Adrenal gland (tissue), 19 donors: ENCODE measurements at regions of chr2 and their contacts with region 1.

Region 1: DNA sequence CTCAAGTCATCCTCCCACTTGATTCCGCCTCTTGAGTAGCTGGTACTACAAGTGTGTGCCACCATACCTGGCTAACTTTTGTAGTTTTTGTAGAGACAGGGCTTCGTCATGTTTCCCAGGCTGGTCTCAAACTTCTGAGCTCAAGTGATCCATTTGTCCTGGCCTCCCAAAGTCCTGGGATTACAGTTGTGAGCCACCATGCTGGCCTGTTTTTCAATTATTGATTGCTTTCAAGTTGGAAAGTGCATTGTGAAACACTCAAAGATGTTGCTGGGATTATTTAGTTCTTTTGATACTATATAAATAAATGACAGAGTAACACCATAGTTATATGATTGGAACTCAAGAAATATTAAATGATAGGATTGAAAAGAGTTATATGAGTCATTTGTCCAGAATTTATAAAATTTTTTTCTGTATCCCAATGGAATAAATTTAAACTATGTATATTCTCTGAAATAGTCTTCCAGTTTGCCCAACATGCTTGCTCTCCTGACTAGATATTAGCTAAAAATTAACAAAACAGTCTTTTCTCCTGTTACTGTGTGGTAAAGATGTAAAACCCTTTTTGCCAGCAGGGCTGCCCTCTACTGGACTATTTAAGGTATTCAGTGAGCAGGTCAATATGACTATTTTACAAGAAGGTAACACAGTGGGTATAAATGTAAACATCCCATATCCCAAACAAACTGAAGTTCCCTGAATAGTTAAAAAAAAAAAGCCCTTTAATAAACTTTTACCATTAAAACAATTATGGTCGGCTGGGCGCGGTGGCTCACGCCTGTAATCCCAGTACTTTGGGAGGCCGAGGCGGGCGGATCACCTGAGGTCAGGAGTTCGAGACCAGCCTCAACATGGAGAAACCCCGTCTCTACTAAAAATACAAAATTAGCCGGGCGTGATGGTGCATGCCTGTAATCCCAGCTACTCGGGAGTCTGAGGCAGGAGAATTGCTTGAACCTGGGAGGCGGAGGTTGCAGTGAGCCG is 42.7 kb downstream of the ACSL3 start:
- DNase-seq: peak; percentile 23 to 76 (median 45)
- H3K4me3 ChIP-seq: no peak overlapping the region
- H3K27ac ChIP-seq: no peak overlapping the region
- H3K4me1 ChIP-seq: peaks cover 18 to 29% of the 10 kb centered on the region in 2 donors
- H3K27me3 ChIP-seq: no peaks in the 10 kb centered on the region
- CTCF ChIP-seq: peak; percentile 50 to 80 (median 66)
- POLR2A ChIP-seq: no peak

Region 2: GRCh38 chr2:222707689-222708525 is 195.6 kb before region 1 on chr2:
- intact Hi-C with region 1: loop called (anchors 5 to 10 kb)
- DNase-seq: peak; percentile 71 to 93 (median 79)
- H3K4me3 ChIP-seq: no peak overlapping the region
- H3K27ac ChIP-seq: no peak overlapping the region
- H3K4me1 ChIP-seq: peaks cover 0 to 14% of the 10 kb centered on the region in 2 donors
- H3K27me3 ChIP-seq: no peaks in the 10 kb centered on the region
- CTCF ChIP-seq: peak; percentile 90 to 97 (median 94)
- POLR2A ChIP-seq: no peak

Region 3: GRCh38 chr2:222797261-222797660 is 106.3 kb before region 1 on chr2:
- intact Hi-C with region 1: loop called (anchors 5 to 10 kb)
- DNase-seq: peak in 1 of 7 donors; percentile 19
- H3K4me3 ChIP-seq: no peak overlapping the region
- H3K27ac ChIP-seq: no peak overlapping the region
- H3K4me1 ChIP-seq: peaks cover 0 to 21% of the 10 kb centered on the region in 2 donors
- H3K27me3 ChIP-seq: no peaks in the 10 kb centered on the region
- CTCF ChIP-seq: peak; percentile 30 to 62 (median 50)
- POLR2A ChIP-seq: no peak

Region 4: DNA sequence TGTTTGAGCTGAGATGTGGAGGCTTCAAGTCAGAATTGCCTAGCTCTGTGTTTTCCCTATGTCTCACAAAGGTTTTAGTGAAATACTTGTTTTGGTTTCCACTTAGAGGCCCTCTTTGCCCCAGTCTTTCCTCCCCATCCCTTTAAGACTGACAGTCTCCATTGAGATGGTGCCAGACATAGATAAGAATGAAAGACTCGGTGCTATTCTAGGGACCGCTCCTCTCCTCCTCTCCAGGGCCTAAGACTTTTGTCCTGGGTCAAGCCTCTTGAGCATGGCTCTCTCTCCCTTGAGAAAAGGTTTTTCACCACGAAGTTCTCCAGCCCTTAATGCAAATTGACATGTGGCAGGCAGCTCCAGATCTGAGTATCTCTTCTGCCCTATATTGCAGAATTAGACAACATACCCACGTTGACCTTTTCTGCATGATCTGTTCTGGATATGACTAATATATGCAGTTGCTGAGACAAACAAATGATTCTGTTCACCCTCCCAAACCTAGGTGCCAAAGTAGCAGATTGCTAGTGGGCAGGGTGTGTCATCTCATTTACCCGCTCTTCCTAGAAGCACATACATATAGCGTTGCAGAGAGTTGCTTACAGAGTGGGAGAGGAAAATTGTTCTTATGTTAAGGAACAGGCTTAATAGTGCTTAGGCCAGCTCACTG is 90.2 kb before region 1 on chr2:
- intact Hi-C with region 1: no loop called
- DNase-seq: no peak
- H3K4me3 ChIP-seq: no peak overlapping the region
- H3K27ac ChIP-seq: no peak overlapping the region
- H3K4me1 ChIP-seq: no peaks in the 10 kb centered on the region
- H3K27me3 ChIP-seq: no peaks in the 10 kb centered on the region
- CTCF ChIP-seq: no peak
- POLR2A ChIP-seq: no peak

Region 5: GRCh38 chr2:222959336-222959735 is 55.8 kb after region 1 on chr2:
- intact Hi-C with region 1: no loop called
- DNase-seq: no peak
- H3K4me3 ChIP-seq: no peak overlapping the region
- H3K27ac ChIP-seq: no peak overlapping the region
- H3K4me1 ChIP-seq: no peaks in the 10 kb centered on the region
- H3K27me3 ChIP-seq: no peaks in the 10 kb centered on the region
- CTCF ChIP-seq: no peak
- POLR2A ChIP-seq: no peak

Region 6: GRCh38 chr2:222969491-222969890 is 66.0 kb after region 1 on chr2:
- intact Hi-C with region 1: no loop called
- DNase-seq: no peak
- H3K4me3 ChIP-seq: no peak overlapping the region
- H3K27ac ChIP-seq: no peak overlapping the region
- H3K4me1 ChIP-seq: no peaks in the 10 kb centered on the region
- H3K27me3 ChIP-seq: peaks cover 4% of the 10 kb centered on the region
- CTCF ChIP-seq: no peak
- POLR2A ChIP-seq: no peak